Aorta (tissue), 5 donors: ENCODE measurements at regions of chr12 and their contacts with region 1.

Region 1: GRCh38 chr12:54431911-54432814 is 13.1 kb upstream of the ITGA5 start:
- DNase-seq: peak; percentile 90 to 93
- ATAC-seq: peak; percentile 76
- H3K4me3 ChIP-seq: no peak overlapping the region
- H3K27ac ChIP-seq: no peak overlapping the region
- H3K4me1 ChIP-seq: peaks cover 2 to 11% of the 10 kb centered on the region in 2 donors
- H3K27me3 ChIP-seq: no peaks in the 10 kb centered on the region

Region 2: DNA sequence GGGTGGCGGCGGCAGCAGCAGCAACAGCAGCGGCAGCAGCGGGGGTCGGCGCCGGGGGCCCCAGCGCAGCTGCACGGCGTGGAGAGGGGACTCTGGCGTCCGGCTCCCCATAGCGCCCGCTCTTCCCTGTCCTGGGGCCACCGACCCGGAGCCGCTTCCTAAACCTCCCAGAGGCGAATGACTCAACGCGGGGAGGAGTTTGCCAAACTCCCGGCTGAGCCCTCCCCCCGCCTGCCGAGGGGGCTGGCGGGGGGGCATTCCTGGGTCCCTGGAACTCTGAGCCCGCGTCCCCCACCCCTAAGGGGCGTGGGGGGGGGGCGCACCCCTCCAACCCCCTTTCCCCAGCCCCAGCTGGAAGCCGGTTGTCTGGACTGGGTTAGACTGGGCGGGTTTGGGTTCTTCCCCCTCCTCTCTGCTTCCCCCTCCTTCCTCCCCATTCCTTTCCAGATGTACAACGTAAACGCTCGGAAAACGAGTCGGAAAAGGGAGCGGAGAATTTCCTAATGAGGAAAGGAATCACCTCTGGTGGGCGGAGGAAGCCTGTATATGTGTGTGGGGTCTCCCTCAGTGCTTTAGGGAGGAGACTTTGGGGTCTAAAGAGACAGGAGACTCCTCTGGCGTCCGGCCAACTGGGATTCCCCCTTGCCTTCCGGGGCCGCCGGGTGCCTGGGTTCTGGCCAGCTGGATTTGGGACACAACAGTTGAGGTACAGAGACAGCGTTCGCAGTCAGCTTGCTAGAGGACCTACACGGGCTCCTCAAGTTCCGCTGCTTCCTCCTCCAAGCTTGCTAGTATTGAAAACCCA is 12.9 kb before region 1 on chr12 and contains the start of gene ITGA5:
- intact Hi-C with region 1: loop called in 1 of 2 experiments (anchors 2 kb)
- DNase-seq: peak; percentile 92 to 96
- ATAC-seq: peak; percentile 83
- H3K4me3 ChIP-seq: peak within 1 kb of the TSS; percentile 97 to 100
- H3K27ac ChIP-seq: peak within 1 kb of the TSS; percentile 62 to 68
- H3K4me1 ChIP-seq: peaks cover 3 to 6% of the 10 kb centered on the region in 2 donors
- H3K27me3 ChIP-seq: no peaks in the 10 kb centered on the region
- total RNA-seq, gene ITGA5: 241 to 1,416 TPM